Activated CD4-positive, alpha-beta T cell treated with anti-CD3 and anti-CD28 coated beads, Interleukin-2, amount 10 ng/mL, durations not matched to agents 24 days and 14 days (primary cell): ENCODE measurements at regions of chr9 and their contacts with region 1.

Region 1: GRCh38 chr9:21789541-21790037 is 12.8 kb upstream of the MTAP start:
- DNase-seq: peak; percentile 88
- H3K4me3 Mint-ChIP-seq: peak overlapping the region; percentile 75
- H3K27ac Mint-ChIP-seq: no peak overlapping the region
- H3K4me1 Mint-ChIP-seq: peaks cover 3% of the 10 kb centered on the region
- H3K27me3 Mint-ChIP-seq: peaks cover 42% of the 10 kb centered on the region

Region 2: GRCh38 chr9:21317956-21318923 is 471.3 kb before region 1 on chr9:
- intact Hi-C with region 1: loop called (anchors 1 kb)
- DNase-seq: peak; percentile 77
- H3K4me3 Mint-ChIP-seq: no peak overlapping the region
- H3K27ac Mint-ChIP-seq: no peak overlapping the region
- H3K4me1 Mint-ChIP-seq: no peaks in the 10 kb centered on the region
- H3K27me3 Mint-ChIP-seq: peaks cover 18% of the 10 kb centered on the region

Region 3: DNA sequence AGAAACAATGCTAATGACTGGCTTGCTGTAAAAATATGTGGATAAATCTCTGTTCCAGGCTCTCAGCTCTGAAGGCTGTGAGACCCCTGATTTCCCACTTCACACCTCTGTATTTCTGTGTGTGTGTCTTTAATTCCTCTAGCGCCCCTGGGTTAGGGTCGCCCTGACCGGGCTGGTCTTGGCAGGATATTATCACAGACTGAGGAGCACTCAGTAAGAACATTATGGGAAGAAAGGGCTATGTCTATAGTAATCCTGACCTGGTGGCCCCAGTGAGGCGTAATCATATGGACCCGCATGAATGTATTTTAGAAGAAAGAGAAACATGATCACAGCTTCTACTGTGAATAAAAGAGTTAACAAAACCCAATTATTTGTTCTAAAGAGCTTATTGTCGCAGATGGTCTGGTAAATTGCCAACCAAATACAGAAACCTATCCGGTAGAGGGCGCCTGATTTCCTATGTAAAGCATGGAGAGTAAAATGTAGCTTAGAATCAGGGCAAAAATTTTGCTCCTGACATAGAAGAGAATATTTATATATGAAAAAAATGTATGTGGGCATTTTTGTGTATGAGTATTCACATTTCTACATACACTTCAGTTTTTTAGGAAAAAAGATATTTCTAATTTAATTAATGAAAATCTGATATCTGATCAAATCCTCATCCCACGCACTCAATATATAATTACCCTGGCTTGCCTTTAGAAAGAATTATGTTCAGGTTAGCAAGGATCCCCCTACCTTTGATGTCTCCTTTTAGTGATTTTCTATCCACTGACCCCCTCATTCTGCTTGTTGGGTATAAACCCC is 355.2 kb before region 1 on chr9:
- intact Hi-C with region 1: loop called (anchors 1 kb)
- DNase-seq: peak; percentile 82
- H3K4me3 Mint-ChIP-seq: no peak overlapping the region
- H3K27ac Mint-ChIP-seq: no peak overlapping the region
- H3K4me1 Mint-ChIP-seq: no peaks in the 10 kb centered on the region
- H3K27me3 Mint-ChIP-seq: peaks cover 50% of the 10 kb centered on the region

Region 4: GRCh38 chr9:21688108-21689102 is 101.2 kb before region 1 on chr9:
- intact Hi-C with region 1: loop called (anchors 5 kb)
- DNase-seq: no peak
- H3K4me3 Mint-ChIP-seq: no peak overlapping the region
- H3K27ac Mint-ChIP-seq: no peak overlapping the region
- H3K4me1 Mint-ChIP-seq: peaks cover 24% of the 10 kb centered on the region
- H3K27me3 Mint-ChIP-seq: peaks cover 15% of the 10 kb centered on the region

Region 5: GRCh38 chr9:21750021-21750735 is 39.4 kb before region 1 on chr9:
- intact Hi-C with region 1: loop called (anchors 5 kb)
- DNase-seq: peak; percentile 4
- H3K4me3 Mint-ChIP-seq: no peak overlapping the region
- H3K27ac Mint-ChIP-seq: no peak overlapping the region
- H3K4me1 Mint-ChIP-seq: no peaks in the 10 kb centered on the region
- H3K27me3 Mint-ChIP-seq: peaks cover 79% of the 10 kb centered on the region